WTC11 (cell line): ENCODE measurements at regions of chr11 and their contacts with region 1.

Region 1: GRCh38 chr11:123654566-123655081 is at the start of gene SCN3B:
- DNase-seq: peak; percentile 79
- ATAC-seq: peak; percentile 87
- H3K4me3 Mint-ChIP-seq: peak within 1 kb of the TSS; percentile 76
- H3K27ac Mint-ChIP-seq: no peak within 1 kb of the TSS
- H3K4me1 Mint-ChIP-seq: peaks cover 14% of the 10 kb centered on the region
- H3K27me3 Mint-ChIP-seq: peaks cover 49% of the 10 kb centered on the region
- CTCF ChIP-seq: no peak
- total RNA-seq, gene SCN3B: 0.37 to 0.79 TPM (median 0.71 TPM) in 3 replicates

Region 2: DNA sequence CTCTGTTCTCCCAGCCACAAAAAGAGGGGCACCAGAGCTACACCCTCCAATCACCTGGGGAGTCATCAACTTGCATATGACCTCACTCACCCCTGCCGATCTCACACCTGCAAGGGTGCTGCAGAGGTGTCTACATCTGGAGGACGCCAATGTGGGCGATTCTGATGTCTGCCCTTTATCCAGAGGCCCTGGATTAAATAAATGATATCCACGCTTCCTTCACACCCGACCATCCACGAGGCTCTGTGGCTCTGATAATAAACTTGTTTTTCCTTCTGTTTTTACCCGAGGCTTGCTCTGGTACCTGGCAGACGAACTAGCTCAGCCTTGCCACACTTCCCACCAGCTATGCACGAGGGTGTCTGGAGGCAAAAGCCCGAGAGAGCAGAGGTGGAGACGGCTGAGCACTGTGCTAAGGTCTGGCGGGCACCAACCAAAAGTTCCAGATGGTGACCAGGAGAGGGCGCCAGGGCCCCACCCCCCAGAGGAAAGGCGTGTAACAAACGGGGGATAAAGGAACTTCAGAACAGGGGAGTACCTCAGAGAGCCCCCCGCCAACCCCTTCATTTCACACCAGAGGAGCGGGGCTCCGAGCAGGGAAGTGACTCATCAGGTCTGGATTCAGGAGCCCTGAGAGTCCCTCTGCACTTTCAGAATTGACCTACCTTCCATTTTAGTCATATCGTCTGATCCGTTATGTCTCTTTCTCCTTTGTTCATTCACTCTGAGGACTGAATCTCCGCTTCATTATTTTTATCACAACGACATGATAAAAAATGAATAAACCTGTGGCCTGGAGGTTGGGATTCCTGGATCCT is 13.7 kb before region 1 on chr11:
- CTCF ChIA-PET with region 1: interaction called, 32 read pairs
- POLR2A ChIA-PET with region 1: no interaction called
- DNase-seq: peak; percentile 77
- ATAC-seq: peak; percentile 93
- H3K4me3 Mint-ChIP-seq: no peak overlapping the region
- H3K27ac Mint-ChIP-seq: no peak overlapping the region
- H3K4me1 Mint-ChIP-seq: peaks cover 31% of the 10 kb centered on the region
- H3K27me3 Mint-ChIP-seq: no peaks in the 10 kb centered on the region; the same call in 1 of the 2 replicates
- CTCF ChIP-seq: peak; percentile 84

Region 3: DNA sequence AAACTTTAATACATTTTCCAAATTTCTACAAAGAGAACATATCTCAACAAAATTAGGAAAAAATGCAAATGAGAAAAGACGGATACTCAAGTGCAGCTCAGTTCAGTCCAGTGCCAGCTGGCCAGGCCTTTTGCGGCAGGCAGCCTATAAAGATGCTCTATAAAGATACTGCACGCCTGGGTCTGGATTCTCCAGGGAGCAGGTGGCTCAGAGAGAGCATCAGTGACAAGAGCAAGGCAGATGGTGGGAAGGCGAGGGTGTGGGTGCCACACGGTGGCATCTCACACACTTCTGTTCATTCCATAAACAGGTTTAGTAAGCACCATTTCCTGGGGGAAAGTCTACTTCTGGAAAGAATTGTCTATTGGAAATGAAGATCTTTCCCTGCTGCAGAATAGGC is 17.9 kb after region 1 on chr11:
- CTCF ChIA-PET with region 1: interaction called, 14 read pairs
- POLR2A ChIA-PET with region 1: interaction called, 3 read pairs
- DNase-seq: no peak
- ATAC-seq: no peak
- H3K4me3 Mint-ChIP-seq: no peak overlapping the region
- H3K27ac Mint-ChIP-seq: no peak overlapping the region
- H3K4me1 Mint-ChIP-seq: peaks cover 8% of the 10 kb centered on the region
- H3K27me3 Mint-ChIP-seq: no peaks in the 10 kb centered on the region
- CTCF ChIP-seq: no peak

Region 4: DNA sequence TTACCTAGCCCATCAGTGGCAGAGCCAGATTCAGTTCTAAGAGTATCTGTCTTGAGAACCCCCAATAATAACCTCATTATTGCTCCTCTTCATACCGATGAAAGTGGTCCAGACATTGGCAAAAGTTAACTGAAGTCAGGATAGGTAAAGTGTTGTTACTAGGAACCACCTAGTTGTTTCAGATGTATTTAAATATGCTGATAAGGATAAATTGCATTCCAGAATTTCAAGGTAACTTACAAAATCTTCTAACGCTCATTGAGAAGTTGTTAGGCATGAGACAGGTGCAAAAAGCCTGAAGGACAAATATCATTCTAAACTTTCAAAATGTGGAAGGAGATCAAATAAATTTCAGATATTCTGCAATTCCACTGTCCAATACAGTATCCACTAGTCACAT is 488.4 kb after region 1 on chr11:
- CTCF ChIA-PET with region 1: no interaction called
- POLR2A ChIA-PET with region 1: no interaction called
- DNase-seq: no peak
- ATAC-seq: no peak
- H3K4me3 Mint-ChIP-seq: no peak overlapping the region
- H3K27ac Mint-ChIP-seq: no peak overlapping the region
- H3K4me1 Mint-ChIP-seq: peaks cover 15% of the 10 kb centered on the region
- H3K27me3 Mint-ChIP-seq: no peaks in the 10 kb centered on the region; the same call in 1 of the 2 replicates
- CTCF ChIP-seq: no peak